IMR-90 (cell line): ENCODE measurements at regions of chr16 and their contacts with region 1.

Region 1: DNA sequence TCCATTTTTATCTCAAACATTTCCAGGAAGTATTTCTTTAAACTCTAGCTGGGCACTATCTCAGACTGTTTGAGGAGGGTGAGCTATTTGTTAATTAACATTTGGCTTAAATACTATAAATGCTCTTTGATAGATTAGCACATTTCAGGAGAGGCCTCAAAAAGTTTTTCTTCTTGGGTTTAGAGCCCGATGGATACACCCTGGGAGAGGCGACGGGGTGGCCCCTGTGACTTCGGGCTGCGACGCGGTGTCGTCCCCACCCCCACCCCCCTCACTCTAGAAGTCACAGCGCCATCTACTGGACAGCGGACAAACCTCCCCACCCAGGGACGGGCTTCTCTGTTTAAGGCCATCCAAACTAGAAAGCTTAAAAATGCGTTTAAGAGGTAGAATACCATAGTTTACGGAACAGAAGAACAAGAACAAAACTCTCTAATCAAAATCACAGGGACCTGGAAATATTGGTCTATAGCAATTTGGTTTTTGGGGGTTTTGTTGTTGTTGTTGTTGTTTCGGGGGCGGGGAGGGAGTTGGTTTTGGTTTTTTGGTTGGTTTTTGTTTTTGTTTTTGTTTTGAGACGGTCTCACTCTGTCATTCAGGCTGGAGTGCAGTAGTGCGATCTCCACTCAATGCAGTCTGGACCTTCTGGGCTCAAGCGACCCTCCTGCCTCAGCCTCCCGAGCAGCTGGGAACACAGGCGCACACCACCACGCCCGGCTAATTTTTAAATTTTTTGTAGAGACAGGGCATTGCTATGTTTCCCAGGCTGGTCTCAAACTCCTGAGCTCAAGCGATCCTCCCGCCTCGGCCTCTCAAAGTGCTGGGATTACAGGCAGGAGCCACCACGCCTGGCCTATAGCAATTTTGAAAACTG is 254.4 kb downstream of the C16orf95 start:
- DNase-seq: peak; percentile 67
- ATAC-seq: peak; percentile 92
- H3K4me3 ChIP-seq: peak overlapping the region; percentile 26; the same call in 1 of the 2 replicates
- H3K27ac ChIP-seq: no peak overlapping the region
- H3K4me1 ChIP-seq: no peaks in the 10 kb centered on the region; the same call in 1 of the 2 replicates
- H3K27me3 ChIP-seq: no peaks in the 10 kb centered on the region; the same call in 1 of the 2 replicates
- CTCF ChIP-seq: peak; percentile 91
- POLR2A ChIP-seq: no peak
- RAD21 ChIP-seq: peak; percentile 90

Region 2: DNA sequence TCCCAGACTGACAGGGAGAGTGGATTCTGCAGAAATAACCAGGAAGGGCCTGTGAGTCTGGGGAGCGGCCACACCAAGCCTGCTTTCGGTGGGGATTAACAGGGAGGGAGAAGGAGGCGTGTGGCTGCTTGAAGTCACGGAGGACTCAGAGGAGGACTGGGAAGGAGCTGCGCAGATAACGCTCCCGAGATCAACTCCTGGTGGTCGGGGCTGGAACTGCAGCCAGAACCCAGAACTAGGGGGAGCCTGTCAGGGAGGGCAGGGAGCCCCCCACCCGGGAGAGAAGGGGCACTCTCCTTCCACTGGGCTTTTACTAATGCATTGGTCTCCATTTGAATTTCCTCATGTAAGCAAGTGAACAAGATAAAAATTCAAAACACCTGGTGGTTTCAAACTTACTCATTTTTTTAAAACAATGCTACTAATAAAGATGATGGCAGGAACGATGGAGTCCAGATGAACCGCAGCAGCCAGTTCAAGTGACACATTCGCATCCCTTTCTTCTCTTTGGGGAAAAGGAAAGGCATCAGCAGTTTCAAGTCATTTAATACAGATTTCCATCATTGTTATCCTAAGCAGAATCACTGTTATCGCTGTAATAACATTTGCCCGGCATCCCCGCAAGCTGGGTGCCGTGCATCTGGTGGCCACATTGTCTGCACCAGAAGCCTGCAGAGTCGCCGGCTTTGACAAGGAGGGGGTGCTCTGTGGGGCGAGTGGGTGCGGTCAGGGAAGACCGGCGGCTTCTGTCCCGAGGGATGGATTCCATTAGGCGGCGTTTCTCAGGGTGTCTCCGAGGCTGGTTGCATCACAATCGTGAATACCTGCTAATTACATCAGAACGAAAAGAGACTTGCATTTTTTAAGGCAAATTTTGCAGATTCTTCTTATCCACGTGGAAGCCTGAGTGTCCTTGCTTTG is 301.4 kb before region 1 on chr16:
- CTCF ChIA-PET with region 1: no interaction called
- POLR2A ChIA-PET with region 1: no interaction called
- dilution Hi-C with region 1: no loop called
- in situ Hi-C with region 1: no loop called
- intact Hi-C with region 1: loop called (anchors 10 kb)
- DNase-seq: peak; percentile 68
- ATAC-seq: peak; percentile 97
- H3K4me3 ChIP-seq: peak overlapping the region; percentile 13; the same call in 1 of the 2 replicates
- H3K27ac ChIP-seq: no peak overlapping the region
- H3K4me1 ChIP-seq: peaks cover 6% of the 10 kb centered on the region; the same call in 1 of the 2 replicates
- H3K27me3 ChIP-seq: no peaks in the 10 kb centered on the region; the same call in 1 of the 2 replicates
- CTCF ChIP-seq: peak; percentile 69
- POLR2A ChIP-seq: no peak
- RAD21 ChIP-seq: peak; percentile 61

Region 3: DNA sequence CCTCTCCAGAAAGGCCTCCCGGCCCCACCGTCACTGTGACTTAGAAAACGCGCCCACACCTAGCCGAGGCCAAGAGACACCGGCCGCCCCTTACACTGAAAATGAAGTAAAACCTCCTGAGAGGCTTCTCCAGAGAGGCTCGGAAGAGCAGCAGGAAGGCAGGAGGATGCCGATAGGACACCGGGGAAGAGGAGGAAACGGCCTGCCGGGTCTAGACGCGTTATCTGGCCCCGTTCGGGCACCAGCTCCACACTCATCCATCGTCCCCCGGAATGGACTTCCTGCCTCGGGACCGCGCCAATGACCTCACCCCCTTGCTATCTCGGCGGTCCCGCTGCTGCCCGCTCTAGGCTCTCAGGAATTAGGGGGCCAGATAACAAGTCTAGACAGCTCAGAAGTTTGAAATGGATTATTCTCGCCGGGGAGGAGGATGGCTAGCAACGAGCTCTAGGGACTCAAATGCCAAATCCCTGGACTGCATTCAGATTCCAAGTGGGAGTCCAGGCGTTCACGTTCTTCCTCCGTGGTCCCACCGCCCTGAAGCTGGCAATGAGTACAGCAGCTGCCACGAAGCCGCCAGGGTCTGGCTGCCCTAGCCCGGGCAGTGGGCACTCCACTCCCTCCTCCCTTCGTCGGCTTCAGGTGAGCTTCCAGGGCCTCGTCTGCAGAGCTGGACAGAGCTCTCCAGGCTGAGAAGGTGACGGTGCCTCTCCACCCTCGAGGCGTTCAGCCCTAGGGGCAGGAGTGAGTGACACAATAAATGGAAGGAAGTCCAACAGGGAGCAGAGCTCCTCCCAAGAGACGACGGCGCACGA is 133.5 kb before region 1 on chr16:
- CTCF ChIA-PET with region 1: interaction called, 3 read pairs
- POLR2A ChIA-PET with region 1: no interaction called
- dilution Hi-C with region 1: no loop called
- in situ Hi-C with region 1: no loop called
- intact Hi-C with region 1: loop called (anchors 10 kb)
- DNase-seq: peak; percentile 93
- ATAC-seq: peak; percentile 66
- H3K4me3 ChIP-seq: no peak overlapping the region
- H3K27ac ChIP-seq: peak overlapping the region; percentile 75
- H3K4me1 ChIP-seq: peaks cover 41% of the 10 kb centered on the region
- H3K27me3 ChIP-seq: no peaks in the 10 kb centered on the region
- CTCF ChIP-seq: no peak
- POLR2A ChIP-seq: peak; percentile 47; the same call in 1 of the 2 replicates
- RAD21 ChIP-seq: peak; percentile 39

Region 4: DNA sequence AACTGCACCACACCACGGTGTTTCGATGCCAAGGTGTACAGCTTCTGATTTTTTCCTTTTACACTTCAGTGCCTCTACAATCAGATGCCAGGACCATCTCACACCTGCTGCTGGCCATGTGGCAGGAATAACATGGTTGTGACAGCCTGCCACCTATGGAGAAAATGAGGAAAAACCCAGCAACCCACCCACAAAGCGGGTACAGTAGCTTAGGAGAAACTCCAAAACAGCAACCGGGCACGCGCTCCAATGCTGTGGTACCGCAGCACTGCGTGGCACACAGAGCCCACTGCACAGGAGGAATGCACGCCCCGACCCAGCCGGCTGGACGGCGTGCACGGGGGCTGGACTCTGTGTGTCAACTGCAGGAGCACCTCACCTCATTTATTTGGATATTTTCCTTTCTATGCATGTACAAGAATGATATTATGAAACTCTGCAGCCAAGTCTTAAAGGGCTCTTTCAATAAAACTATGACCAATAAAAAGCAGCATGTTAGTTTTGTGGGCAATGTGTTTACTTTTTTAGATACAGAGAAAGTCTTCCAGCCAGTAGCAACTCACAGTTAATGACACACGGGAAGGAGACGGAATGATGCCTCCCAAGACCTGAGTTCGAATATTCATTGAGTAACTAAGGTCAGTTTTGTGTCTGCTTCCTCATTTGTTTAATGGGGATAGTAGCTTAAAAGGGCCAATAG is 375.3 kb after region 1 on chr16:
- CTCF ChIA-PET with region 1: no interaction called
- POLR2A ChIA-PET with region 1: no interaction called
- dilution Hi-C with region 1: no loop called
- in situ Hi-C with region 1: no loop called
- intact Hi-C with region 1: no loop called
- DNase-seq: peak; percentile 40
- ATAC-seq: no peak
- H3K4me3 ChIP-seq: no peak overlapping the region
- H3K27ac ChIP-seq: no peak overlapping the region
- H3K4me1 ChIP-seq: peaks cover 21% of the 10 kb centered on the region
- H3K27me3 ChIP-seq: no peaks in the 10 kb centered on the region
- CTCF ChIP-seq: no peak
- POLR2A ChIP-seq: no peak
- RAD21 ChIP-seq: no peak